PC-9 (cell line): ENCODE measurements at regions of chr10 and their contacts with region 1.

Region 1: DNA sequence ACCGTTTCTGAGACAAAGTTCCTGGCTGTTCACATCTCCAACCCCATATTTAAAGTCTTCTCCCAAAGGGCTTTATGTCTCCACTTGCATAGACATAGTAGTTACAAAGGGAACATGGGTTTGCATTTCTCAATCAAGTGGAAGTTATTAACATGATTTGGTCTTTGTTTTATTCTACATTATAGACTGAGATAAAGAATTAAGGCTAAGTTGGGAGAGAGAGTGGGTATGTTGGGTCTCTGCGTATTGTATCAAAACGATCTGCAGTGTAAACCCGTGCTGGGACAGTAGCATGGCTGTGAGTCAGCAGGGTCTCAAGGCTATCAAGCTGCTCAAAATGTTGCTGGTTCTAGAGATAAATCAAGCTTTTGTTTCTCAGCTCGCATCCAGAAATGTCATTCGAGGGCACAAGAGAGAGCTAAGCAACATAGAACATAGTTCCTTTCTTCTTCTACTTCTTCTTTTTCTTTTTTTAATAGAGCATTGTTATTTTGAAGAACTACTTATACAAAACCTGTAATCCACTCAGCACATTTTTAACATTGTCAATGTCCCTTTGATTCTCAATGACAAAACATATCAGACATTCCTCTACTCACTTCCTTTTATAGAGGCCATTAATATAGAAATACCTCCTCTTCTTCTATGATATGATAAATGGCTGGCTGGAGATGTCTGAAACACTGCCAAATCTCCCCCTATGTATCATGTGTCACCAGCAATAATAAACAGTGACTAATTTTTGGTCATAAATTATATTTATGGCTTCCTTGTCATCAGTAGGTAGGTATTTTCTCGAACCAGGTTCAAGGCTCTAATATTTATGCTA is 34.5 kb upstream of the RHOBTB1 start:
- DNase-seq: peak; percentile 27 to 88
- H3K4me3 ChIP-seq: no peak overlapping the region
- H3K27ac ChIP-seq: peak overlapping the region; percentile 7; the same call in 1 of the 2 replicates
- H3K4me1 ChIP-seq: peaks cover 43% of the 10 kb centered on the region
- H3K27me3 ChIP-seq: no peaks in the 10 kb centered on the region
- CTCF ChIP-seq: no peak

Region 2: DNA sequence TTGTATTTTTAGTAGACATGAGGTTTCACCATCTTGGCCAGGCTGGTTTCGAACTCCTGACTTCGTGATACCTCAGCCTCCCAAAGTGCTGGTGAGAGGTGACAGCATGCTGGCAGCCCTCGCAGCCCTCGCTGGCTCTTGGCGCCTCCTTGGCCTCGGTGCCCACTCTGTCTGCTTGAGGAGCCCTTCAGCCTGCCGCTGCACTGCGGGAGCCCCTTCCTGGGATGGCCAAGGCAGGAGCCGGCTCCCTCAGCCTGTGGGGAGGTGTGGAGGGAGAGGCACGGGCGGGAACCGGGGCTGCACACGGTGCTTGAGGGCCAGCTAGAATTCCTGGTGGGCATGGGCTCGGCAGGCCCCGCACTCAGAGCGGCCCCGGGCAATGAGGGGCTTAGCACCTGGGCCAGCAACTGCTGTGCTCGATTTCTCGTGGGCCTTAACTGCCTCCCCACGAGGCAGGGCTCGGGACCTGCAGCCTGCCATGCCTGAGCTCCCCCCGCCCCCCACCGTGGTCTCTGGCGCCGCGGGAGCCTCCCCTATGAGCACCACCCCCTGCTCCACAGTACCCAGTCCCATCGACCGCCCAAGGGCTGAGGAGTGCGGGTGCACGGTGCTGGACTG is 62.0 kb after region 1 on chr10:
- CTCF ChIA-PET with region 1: no interaction called
- POLR2A ChIA-PET with region 1: no interaction called
- intact Hi-C with region 1: loop called (anchors 2 kb)
- DNase-seq: no peak
- H3K4me3 ChIP-seq: no peak overlapping the region
- H3K27ac ChIP-seq: no peak overlapping the region
- H3K4me1 ChIP-seq: peaks cover 33% of the 10 kb centered on the region
- H3K27me3 ChIP-seq: no peaks in the 10 kb centered on the region
- CTCF ChIP-seq: no peak